ENCODE measurements at regions of chr3 and their contacts with region 1.

Region 1: GRCh38 chr3:100893590-100893989 is 99.6 kb downstream of the ABI3BP start:
- DNase-seq: peak; percentile 46
- H3K4me3 ChIP-seq: no peak overlapping the region
- CTCF ChIP-seq: peak; percentile 80

Region 2: GRCh38 chr3:101195951-101196713 is 302.5 kb after region 1 on chr3:
- in situ Hi-C with region 1: loop called (anchors 10 kb)
- DNase-seq: peak; percentile 67
- H3K4me3 ChIP-seq: no peak overlapping the region
- CTCF ChIP-seq: peak; percentile 61

Region 3: GRCh38 chr3:102106416-102107097 is 1213.0 kb after region 1 on chr3:
- in situ Hi-C with region 1: no loop called
- DNase-seq: peak; percentile 54
- H3K4me3 ChIP-seq: no peak overlapping the region
- CTCF ChIP-seq: no peak